Activated CD8-positive, alpha-beta T cell treated with anti-CD3 and anti-CD28 coated beads, Interleukin-2, amount 10 ng/mL, durations not matched to agents 7 days and 5 days (primary cell): ENCODE measurements at regions of chr7 and their contacts with region 1.

Region 1: GRCh38 chr7:150737265-150738055 is at the start of gene GIMAP5:
- DNase-seq: peak; percentile 68
- ATAC-seq: peak; percentile 78
- H3K4me3 Mint-ChIP-seq: peak within 1 kb of the TSS; percentile 90
- H3K27ac Mint-ChIP-seq: peak within 1 kb of the TSS; percentile 89
- H3K4me1 Mint-ChIP-seq: peaks cover 79% of the 10 kb centered on the region
- H3K27me3 Mint-ChIP-seq: no peaks in the 10 kb centered on the region
- total RNA-seq, gene GIMAP5: 56.3 to 63.3 TPM

Region 2: GRCh38 chr7:150567169-150567568 is 170.3 kb before region 1 on chr7 and contains the start of gene GIMAP4:
- CTCF ChIA-PET with region 1: interaction called, 17 read pairs
- POLR2A ChIA-PET with region 1: interaction called, 15 read pairs
- DNase-seq: peak; percentile 59
- ATAC-seq: peak; percentile 61
- H3K4me3 Mint-ChIP-seq: peak within 1 kb of the TSS; percentile 88
- H3K27ac Mint-ChIP-seq: peak within 1 kb of the TSS; percentile 90
- H3K4me1 Mint-ChIP-seq: peaks cover 59% of the 10 kb centered on the region
- H3K27me3 Mint-ChIP-seq: no peaks in the 10 kb centered on the region
- total RNA-seq, gene GIMAP4: 174 to 186 TPM

Region 3: DNA sequence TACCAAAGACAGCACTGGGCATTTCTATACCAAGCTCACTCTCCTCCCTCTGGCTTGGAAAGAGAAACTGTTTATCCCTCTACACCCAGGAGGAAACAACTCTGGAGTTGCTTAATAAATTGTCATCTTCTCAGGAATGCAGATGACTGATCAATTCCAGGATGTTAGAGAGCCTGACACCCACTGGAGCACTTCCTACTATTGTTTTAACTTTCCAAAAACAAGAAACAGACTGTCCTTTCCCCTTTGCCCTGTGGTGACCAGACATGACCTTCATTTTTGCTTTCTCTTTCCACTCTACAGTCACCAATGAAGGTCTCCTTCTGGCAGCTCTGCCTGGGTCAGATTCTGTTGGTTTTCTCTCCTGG is 150.7 kb before region 1 on chr7:
- CTCF ChIA-PET with region 1: no interaction called
- POLR2A ChIA-PET with region 1: no interaction called
- DNase-seq: no peak
- ATAC-seq: peak; percentile 53
- H3K4me3 Mint-ChIP-seq: no peak overlapping the region
- H3K27ac Mint-ChIP-seq: peak overlapping the region; percentile 69
- H3K4me1 Mint-ChIP-seq: peaks cover 35% of the 10 kb centered on the region
- H3K27me3 Mint-ChIP-seq: no peaks in the 10 kb centered on the region

Region 4: DNA sequence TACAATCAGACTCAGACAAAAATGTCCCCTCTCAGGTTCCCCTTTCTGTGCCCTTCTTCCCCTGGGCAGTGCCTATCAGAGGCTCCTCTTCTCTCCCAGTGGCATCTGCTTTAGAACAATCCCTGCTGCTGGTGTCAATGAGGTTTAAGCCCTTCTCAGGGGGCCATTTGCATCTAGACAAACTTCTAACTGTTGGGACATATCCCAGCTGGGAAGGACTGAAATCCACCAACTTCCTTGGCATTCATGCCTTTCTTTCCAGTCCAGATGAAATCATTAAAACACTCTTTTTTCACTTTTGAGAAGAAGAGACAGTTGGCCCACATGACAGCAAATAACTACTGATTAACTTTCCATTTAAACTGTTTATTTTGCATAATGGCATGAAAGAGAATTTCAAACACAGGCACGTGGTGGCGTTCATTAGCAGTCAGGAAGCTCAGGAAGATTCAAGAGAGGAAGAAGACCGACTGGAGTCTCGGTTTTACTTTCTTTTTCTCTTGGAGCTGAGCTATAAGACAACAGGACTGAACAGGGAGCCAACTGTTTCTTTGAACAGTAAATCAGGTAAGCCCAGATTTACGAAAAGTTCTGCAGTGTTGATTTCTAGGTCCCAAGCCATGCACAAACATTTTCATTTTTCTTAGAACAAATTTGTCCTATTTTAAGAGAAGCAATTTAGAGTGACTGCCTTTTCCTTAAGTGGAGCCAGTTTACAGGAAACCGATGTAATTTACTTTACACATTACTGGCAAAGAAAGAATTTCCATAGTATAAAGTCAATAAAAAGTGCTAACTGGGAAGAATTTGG is 52.0 kb before region 1 on chr7 and contains the start of gene GIMAP2:
- CTCF ChIA-PET with region 1: interaction called, 5 read pairs
- POLR2A ChIA-PET with region 1: interaction called, 15 read pairs
- DNase-seq: peak; percentile 50
- ATAC-seq: peak; percentile 89
- H3K4me3 Mint-ChIP-seq: peak within 1 kb of the TSS; percentile 95
- H3K27ac Mint-ChIP-seq: peak within 1 kb of the TSS; percentile 97
- H3K4me1 Mint-ChIP-seq: peaks cover 76% of the 10 kb centered on the region
- H3K27me3 Mint-ChIP-seq: no peaks in the 10 kb centered on the region
- total RNA-seq, gene GIMAP2: 79.0 to 82.9 TPM

Region 5: GRCh38 chr7:150748376-150748775 is 10.9 kb after region 1 on chr7:
- CTCF ChIA-PET with region 1: interaction called, 47 read pairs
- POLR2A ChIA-PET with region 1: interaction called, 14 read pairs
- DNase-seq: no peak
- ATAC-seq: no peak
- H3K4me3 Mint-ChIP-seq: no peak overlapping the region
- H3K27ac Mint-ChIP-seq: peak overlapping the region; percentile 35
- H3K4me1 Mint-ChIP-seq: peaks cover 86% of the 10 kb centered on the region
- H3K27me3 Mint-ChIP-seq: no peaks in the 10 kb centered on the region